AG04449 (cell line): ENCODE measurements at regions of chr12 and their contacts with region 1.

Region 1: DNA sequence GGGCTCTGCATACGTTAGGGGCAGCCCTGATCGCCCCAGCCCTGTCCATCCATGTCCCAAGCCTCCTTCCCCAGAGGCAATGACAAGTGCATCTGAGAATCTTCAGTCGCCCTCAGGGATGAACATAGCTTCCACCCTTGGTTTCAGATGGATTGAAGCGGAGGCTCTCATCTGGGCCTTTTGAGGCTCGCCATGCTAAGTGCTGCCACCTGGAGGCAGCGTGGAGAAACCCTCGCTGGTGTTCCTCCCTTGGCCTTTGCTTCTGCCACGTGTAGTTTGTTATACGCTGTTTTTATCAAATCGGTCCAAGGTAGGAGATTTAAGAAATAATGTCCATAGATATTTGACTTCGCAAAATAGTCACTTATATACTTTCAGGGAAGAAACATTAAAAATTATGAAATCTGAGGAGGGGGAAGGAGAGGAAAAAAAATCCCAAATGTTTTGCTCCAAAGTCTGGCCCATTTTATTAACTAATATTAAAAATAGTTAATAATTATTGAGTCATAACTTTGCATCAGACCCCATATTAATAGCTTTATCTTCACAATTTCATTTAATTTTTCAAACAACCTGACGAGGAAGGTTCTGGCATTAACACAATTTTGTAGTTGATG is 28.8 kb upstream of the LRRC10 start:
- DNase-seq: peak; percentile 3
- H3K4me3 ChIP-seq: no peak overlapping the region
- CTCF ChIP-seq: peak; percentile 89

Region 2: DNA sequence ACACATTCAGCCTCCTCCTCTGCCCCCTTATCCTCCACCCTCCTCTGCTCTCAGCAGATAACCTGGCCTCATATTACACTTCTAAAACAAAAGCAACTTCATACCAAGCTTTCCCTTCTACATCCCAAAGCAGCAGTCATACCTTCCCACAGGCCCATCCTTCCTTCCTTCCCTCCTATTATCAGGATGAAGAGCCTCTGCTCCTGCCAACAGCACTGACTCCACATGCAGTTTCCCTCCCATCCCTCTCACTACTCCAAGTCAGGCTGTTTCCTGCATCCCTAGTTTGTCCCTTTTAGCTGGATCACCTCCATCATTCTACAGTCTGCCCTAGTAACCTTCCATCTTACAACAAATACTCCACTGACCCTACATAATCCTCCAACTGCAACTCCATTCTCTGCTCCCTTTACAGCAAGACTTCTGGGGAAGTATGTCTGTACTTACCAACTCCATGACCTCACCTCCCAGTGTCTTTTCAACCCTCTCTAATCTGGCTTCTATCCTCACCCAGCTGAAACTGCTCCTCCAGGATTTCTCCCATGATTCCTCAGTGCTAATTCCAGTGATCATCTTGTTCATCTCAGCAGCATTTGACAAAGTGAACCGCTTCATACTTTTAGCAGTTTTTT is 284.8 kb before region 1 on chr12:
- CTCF ChIA-PET with region 1: interaction called, 99 read pairs
- POLR2A ChIA-PET with region 1: no interaction called
- DNase-seq: no peak
- H3K4me3 ChIP-seq: no peak overlapping the region
- CTCF ChIP-seq: no peak

Region 3: GRCh38 chr12:69388371-69388770 is 251.1 kb before region 1 on chr12:
- CTCF ChIA-PET with region 1: interaction called, 39 read pairs
- POLR2A ChIA-PET with region 1: no interaction called
- DNase-seq: peak; percentile 29
- H3K4me3 ChIP-seq: no peak overlapping the region
- CTCF ChIP-seq: peak; percentile 44

Region 4: GRCh38 chr12:69655377-69656336 is 16.1 kb after region 1 on chr12:
- CTCF ChIA-PET with region 1: interaction called, 117 read pairs
- POLR2A ChIA-PET with region 1: no interaction called
- DNase-seq: peak; percentile 71
- H3K4me3 ChIP-seq: no peak overlapping the region
- CTCF ChIP-seq: no peak

Region 5: GRCh38 chr12:69671597-69671996 is 32.1 kb after region 1 on chr12:
- CTCF ChIA-PET with region 1: interaction called, 14 read pairs
- POLR2A ChIA-PET with region 1: no interaction called
- DNase-seq: no peak
- H3K4me3 ChIP-seq: no peak overlapping the region
- CTCF ChIP-seq: no peak

Region 6: DNA sequence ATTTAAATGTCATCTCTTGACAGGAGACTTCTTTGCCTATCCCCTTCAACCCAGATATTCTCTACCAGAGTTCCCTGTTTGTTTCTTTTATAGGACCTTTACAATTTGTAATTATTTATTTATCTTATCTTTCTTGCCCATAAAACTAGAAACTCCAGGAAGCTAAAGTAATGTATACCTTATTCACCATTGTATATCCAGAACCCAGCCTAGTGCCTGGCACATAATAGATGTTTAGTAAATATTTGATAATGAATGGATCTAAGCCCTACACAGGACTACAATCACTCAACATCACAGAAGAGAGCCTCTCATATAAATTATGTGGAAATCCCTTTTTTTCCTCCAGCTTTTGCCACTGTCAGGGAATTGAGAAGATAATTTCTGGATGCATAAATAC is 478.2 kb after region 1 on chr12:
- CTCF ChIA-PET with region 1: no interaction called
- POLR2A ChIA-PET with region 1: no interaction called
- DNase-seq: no peak
- H3K4me3 ChIP-seq: no peak overlapping the region
- CTCF ChIP-seq: no peak